CD14-positive monocyte (primary cell): ENCODE measurements at regions of chr2 and their contacts with region 1.

Region 1: DNA sequence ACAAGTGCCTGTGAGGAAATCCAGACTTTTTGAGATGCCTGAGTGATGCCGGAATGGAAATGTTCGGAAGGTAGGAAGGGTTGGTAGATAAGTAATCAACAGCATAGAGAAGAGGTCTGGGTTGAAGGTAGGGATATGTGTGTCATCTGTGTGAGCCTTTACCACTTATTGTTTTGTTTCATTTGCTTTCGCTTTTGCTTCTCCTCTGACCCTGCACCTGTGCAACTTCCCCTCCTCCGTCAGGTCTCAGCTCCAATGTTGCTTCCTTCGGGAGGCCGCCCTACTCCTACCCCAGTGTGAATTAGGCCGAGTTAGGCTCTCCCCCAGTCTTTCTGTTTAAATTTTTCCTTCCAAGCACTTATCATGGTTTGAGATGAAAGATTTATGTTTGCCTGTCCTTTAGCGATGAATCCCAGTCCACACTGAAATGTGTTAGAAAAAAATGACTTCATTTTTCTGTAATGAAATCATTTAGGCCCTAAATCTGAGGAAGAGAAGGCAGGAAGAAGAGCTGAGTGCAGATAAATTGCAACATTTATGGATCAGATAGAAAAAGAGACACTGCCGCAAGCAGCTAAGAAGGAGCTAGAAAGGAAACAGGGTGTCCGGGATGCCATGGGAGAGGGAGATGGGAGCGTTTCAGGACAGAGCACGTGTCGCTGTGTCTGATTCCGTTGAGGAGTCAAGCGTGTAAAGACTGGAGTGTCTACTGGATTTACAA is 139.6 kb upstream of the PELI1 start:
- DNase-seq: peak in 2 of 3 donors; percentile 40 to 49
- H3K4me3 ChIP-seq: peak overlapping the region in 1 of 3 experiments; percentile 58
- H3K4me3 Mint-ChIP-seq: no peak overlapping the region
- H3K27ac ChIP-seq: peak overlapping the region in 1 of 2 donors; percentile 69
- H3K27ac Mint-ChIP-seq: no peak overlapping the region
- H3K4me1 ChIP-seq: peaks cover 20 to 25% of the 10 kb centered on the region in 2 donors
- H3K4me1 Mint-ChIP-seq: peaks cover 6% of the 10 kb centered on the region
- H3K27me3 ChIP-seq: no peaks in the 10 kb centered on the region
- H3K27me3 Mint-ChIP-seq: peaks cover 3 to 5% (median 3%) of the 10 kb centered on the region in 3 donors
- CTCF ChIP-seq: no peak

Region 2: GRCh38 chr2:64228126-64228678 is 55.6 kb before region 1 on chr2:
- intact Hi-C with region 1: loop called in 1 of 2 experiments (anchors 10 kb)
- DNase-seq: peak; percentile 64 to 74 (median 74)
- H3K4me3 ChIP-seq: peak overlapping the region; percentile 46 to 80 (median 75)
- H3K4me3 Mint-ChIP-seq: peak overlapping the region; percentile 90 to 98
- H3K27ac ChIP-seq: peak overlapping the region; percentile 71 to 87
- H3K27ac Mint-ChIP-seq: peak overlapping the region; percentile 93 to 99 (median 97)
- H3K4me1 ChIP-seq: peaks cover 24 to 36% of the 10 kb centered on the region in 2 donors
- H3K4me1 Mint-ChIP-seq: peaks cover 39% of the 10 kb centered on the region
- H3K27me3 ChIP-seq: no peaks in the 10 kb centered on the region
- H3K27me3 Mint-ChIP-seq: peaks cover 0 to 2% (median 0%) of the 10 kb centered on the region in 3 donors
- CTCF ChIP-seq: no peak

Region 3: DNA sequence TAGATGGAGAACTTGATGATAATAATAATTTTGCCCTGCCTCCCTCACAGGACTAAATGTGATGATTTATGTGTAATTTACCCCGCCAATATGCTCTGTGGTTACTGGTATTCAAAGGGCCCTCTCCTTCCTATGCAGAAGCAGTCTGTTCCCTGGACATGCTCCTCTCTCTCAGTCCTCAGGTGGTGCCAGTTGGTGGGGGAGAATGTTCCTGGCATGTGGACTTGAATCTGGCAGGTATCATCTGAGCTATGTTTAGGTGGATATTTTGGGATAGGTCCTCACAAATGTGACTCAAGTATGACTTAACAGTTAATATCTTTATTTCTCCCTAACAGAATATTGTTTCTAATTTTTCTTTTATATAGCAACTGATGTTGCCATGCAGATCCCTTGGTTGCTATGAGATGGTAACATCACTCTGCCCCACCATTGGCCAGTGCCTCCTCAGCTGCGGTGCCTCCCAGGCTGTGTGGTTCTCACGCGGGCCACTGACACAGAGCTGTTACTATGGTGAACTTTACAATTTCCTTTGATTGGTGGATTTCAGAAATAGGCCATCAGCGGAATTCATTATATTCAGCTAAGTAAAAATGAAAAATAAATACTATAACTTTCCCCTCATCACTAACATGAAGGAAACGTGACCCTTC is 32.9 kb before region 1 on chr2:
- intact Hi-C with region 1: no loop called
- DNase-seq: no peak
- H3K4me3 ChIP-seq: no peak overlapping the region
- H3K4me3 Mint-ChIP-seq: no peak overlapping the region
- H3K27ac ChIP-seq: no peak overlapping the region
- H3K27ac Mint-ChIP-seq: peak overlapping the region in 1 of 7 donors; percentile 7
- H3K4me1 ChIP-seq: no peaks in the 10 kb centered on the region
- H3K4me1 Mint-ChIP-seq: no peaks in the 10 kb centered on the region
- H3K27me3 ChIP-seq: no peaks in the 10 kb centered on the region
- H3K27me3 Mint-ChIP-seq: peaks cover 0 to 5% (median 0%) of the 10 kb centered on the region in 3 donors
- CTCF ChIP-seq: no peak

Region 4: GRCh38 chr2:64383016-64383591 is 99.3 kb after region 1 on chr2:
- intact Hi-C with region 1: no loop called
- DNase-seq: peak; percentile 19 to 21 (median 20)
- H3K4me3 ChIP-seq: no peak overlapping the region
- H3K4me3 Mint-ChIP-seq: no peak overlapping the region
- H3K27ac ChIP-seq: no peak overlapping the region
- H3K27ac Mint-ChIP-seq: peak overlapping the region in 1 of 7 donors; percentile 11
- H3K4me1 ChIP-seq: peaks cover 8 to 11% of the 10 kb centered on the region in 2 donors
- H3K4me1 Mint-ChIP-seq: peaks cover 15% of the 10 kb centered on the region
- H3K27me3 ChIP-seq: no peaks in the 10 kb centered on the region
- H3K27me3 Mint-ChIP-seq: peaks cover 0 to 3% (median 0%) of the 10 kb centered on the region in 3 donors
- CTCF ChIP-seq: no peak

Region 5: DNA sequence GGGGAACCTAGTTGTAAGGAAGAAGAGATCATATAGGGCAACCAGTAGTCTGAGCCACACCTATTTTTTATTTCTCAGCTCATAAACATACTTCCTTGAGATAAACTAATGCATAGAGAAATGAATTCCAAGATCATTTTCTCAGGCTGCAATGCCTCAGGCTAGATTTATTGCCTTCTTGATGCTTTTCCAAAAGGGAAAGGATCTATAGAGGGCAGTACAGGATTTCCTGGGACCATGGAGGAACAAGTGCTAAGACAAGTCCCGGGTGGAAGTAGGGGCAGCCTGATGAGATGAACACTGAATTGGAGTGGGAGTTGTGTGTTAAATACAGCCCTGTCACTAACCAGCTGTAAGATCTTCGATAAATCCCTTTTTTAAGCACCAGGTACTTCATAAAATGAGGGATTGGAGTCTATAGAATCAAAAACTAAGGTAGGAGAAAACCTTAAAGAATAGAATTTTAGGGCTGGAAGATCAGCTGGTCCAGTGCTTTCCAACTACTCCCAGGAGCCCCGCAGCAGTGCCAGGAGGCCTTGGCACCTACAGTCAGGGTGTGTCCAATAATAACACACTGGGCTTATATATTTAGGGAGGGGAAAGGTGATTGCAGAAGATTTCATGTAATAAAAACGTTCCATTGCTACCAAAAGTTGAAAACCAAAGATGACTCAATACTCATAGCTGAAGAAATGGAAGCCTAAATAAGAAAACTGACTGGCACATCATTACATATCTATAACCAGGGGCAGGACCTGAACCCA is 311.8 kb after region 1 on chr2:
- intact Hi-C with region 1: no loop called
- DNase-seq: no peak
- H3K4me3 ChIP-seq: no peak overlapping the region
- H3K4me3 Mint-ChIP-seq: no peak overlapping the region
- H3K27ac ChIP-seq: no peak overlapping the region
- H3K27ac Mint-ChIP-seq: no peak overlapping the region
- H3K4me1 ChIP-seq: no peaks in the 10 kb centered on the region
- H3K4me1 Mint-ChIP-seq: peaks cover 7% of the 10 kb centered on the region
- H3K27me3 ChIP-seq: no peaks in the 10 kb centered on the region
- H3K27me3 Mint-ChIP-seq: peaks cover 0 to 3% (median 0%) of the 10 kb centered on the region in 3 donors
- CTCF ChIP-seq: no peak